Transverse colon (tissue), 4 donors: ENCODE measurements at regions of chr20 and their contacts with region 1.

Region 1: GRCh38 chr20:45044084-45044573 is 56.8 kb downstream of the KCNS1 start:
- DNase-seq: peak; percentile 15
- H3K4me3 ChIP-seq: no peak overlapping the region
- H3K27ac ChIP-seq: no peak overlapping the region
- H3K4me1 ChIP-seq: peaks cover 3 to 27% (median 7%) of the 10 kb centered on the region in 4 donors
- H3K27me3 ChIP-seq: no peaks in the 10 kb centered on the region
- CTCF ChIP-seq: peak; percentile 74 to 86 (median 78)
- EP300 ChIP-seq: no peak
- POLR2A ChIP-seq: no peak

Region 2: GRCh38 chr20:45090481-45090880 is 46.4 kb after region 1 on chr20:
- in situ Hi-C with region 1: loop called in 1 of 4 experiments (anchors 5 kb)
- intact Hi-C with region 1: no loop called
- DNase-seq: no peak
- H3K4me3 ChIP-seq: no peak overlapping the region
- H3K27ac ChIP-seq: no peak overlapping the region
- H3K4me1 ChIP-seq: no peaks in the 10 kb centered on the region
- H3K27me3 ChIP-seq: no peaks in the 10 kb centered on the region
- CTCF ChIP-seq: no peak
- EP300 ChIP-seq: no peak
- POLR2A ChIP-seq: no peak